Activated CD8-positive, alpha-beta T cell treated with anti-CD3 and anti-CD28 coated beads for 36 hours (primary cell): ENCODE measurements at regions of chr14 and their contacts with region 1.

Region 1: DNA sequence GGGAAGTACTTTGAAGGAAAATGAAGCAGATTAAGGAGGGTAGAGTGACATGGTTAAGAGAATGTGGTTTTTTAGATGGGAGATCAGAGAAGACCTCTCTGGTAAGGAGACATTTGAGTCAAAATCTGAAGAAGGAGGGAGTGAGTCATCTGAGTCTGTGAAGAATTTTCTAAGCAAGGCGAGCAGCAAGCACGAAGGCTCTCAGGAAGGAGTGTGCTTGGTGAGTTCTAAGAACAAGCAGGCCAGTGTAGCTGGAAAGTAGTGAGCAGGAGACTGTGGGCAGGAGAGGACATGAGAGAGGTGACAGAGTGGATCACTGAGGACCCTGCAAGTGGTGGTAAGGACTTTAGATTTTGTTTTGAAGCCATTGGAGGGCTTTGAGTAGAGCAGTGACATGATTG is 76.3 kb upstream of the FUT8 start:
- DNase-seq: peak; percentile 81
- ATAC-seq: peak; percentile 89
- H3K4me3 Mint-ChIP-seq: peak overlapping the region; percentile 80
- H3K27ac Mint-ChIP-seq: peak overlapping the region; percentile 94
- H3K4me1 Mint-ChIP-seq: peaks cover 56% of the 10 kb centered on the region
- H3K27me3 Mint-ChIP-seq: no peaks in the 10 kb centered on the region
- CTCF ChIP-seq: no peak

Region 2: DNA sequence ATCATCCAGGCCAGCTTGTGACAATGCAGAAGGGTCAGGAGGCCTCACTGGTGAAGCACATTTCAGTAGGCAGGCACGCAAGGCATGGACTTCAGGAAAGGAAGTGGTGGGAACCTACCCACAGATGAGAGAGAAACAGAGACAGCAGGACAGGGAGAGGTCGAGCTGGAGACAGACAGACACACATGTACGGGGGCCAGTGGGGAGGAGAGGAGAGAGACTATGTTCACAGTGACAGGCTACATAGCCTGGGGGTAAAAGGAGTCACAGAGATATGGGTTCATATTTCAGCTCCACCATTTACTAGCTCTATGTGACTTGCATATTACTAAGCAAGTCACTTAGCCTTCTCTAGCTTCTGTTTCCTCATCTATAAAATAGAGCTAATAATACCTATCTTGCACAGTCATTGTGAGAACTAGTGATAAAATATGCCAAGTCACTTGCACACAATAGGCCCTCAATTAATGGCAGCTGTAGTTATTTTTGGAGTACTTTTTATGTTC is 14.8 kb before region 1 on chr14:
- CTCF ChIA-PET with region 1: interaction called, 8 read pairs
- POLR2A ChIA-PET with region 1: interaction called, 12 read pairs
- intact Hi-C with region 1: no loop called
- DNase-seq: peak; percentile 50
- ATAC-seq: peak; percentile 87
- H3K4me3 Mint-ChIP-seq: peak overlapping the region; percentile 34
- H3K27ac Mint-ChIP-seq: peak overlapping the region; percentile 86
- H3K4me1 Mint-ChIP-seq: peaks cover 45% of the 10 kb centered on the region
- H3K27me3 Mint-ChIP-seq: no peaks in the 10 kb centered on the region
- CTCF ChIP-seq: no peak